Psoas muscle (tissue), 8 donors: ENCODE measurements at regions of chr16 and their contacts with region 1.

Region 1: GRCh38 chr16:49407873-49408550 is 34.4 kb downstream of the C16orf78 start:
- DNase-seq: peak; percentile 86 to 93
- ATAC-seq: peak; percentile 98 to 100 (median 98)
- H3K4me3 ChIP-seq: no peak overlapping the region
- H3K27ac ChIP-seq: no peak overlapping the region
- H3K4me1 ChIP-seq: no peaks in the 10 kb centered on the region
- H3K27me3 ChIP-seq: no peaks in the 10 kb centered on the region
- CTCF ChIP-seq: peak; percentile 94

Region 2: DNA sequence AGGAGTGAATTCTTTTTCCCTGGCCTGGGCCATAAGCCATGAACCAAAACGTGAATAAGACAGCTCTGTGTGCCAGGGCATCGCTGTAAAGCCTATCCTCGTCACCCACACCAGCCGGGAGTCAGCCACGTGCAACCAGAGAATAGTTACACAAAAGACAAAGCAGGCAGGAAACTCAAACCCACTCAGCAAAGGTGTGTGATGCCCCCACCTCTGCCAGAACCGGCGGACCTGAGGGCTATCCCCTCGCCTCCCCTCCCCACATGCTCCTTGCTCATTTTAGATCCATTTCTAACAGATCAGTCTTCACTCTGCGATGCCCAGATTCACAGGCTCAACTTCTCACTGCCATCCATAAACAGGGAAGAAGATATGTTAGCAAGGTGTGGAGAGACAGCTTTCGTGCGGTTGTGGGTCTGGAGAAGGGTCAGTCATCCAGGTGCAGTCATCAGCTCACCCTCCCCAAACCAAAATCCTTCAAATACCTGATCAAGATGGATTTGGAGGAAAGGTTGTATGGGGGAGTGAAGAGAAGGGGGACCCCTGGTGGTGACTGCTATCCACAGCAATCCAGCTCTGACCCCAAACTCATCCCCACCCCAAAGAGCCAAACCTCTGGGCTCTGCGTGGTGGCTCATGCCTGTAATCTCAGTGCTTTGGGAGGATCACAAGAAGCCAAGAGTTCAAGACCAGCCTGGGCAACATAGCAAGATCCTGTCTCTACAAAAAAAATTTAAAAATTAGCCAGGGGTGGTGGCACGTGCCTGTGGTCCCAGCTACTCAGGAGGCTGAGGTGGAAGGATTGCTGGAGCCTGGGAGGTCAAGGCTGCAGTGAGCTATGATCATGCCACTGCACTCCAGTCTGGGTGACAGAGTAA is 184.8 kb after region 1 on chr16:
- intact Hi-C with region 1: loop called (anchors 2 to 5 kb)
- DNase-seq: peak in 1 of 2 donors; percentile 64
- ATAC-seq: peak in 3 of 4 donors; percentile 54 to 77 (median 62)
- H3K4me3 ChIP-seq: no peak overlapping the region
- H3K27ac ChIP-seq: no peak overlapping the region
- H3K4me1 ChIP-seq: peaks cover 25% of the 10 kb centered on the region
- H3K27me3 ChIP-seq: peaks cover 0 to 3% (median 0%) of the 10 kb centered on the region in 3 donors
- CTCF ChIP-seq: peak; percentile 69

Region 3: GRCh38 chr16:49631187-49632041 is 223.4 kb after region 1 on chr16:
- intact Hi-C with region 1: no loop called
- DNase-seq: no peak
- ATAC-seq: peak in 1 of 4 donors; percentile 34
- H3K4me3 ChIP-seq: no peak overlapping the region
- H3K27ac ChIP-seq: no peak overlapping the region
- H3K4me1 ChIP-seq: peaks cover 6% of the 10 kb centered on the region
- H3K27me3 ChIP-seq: no peaks in the 10 kb centered on the region
- CTCF ChIP-seq: no peak

Region 4: DNA sequence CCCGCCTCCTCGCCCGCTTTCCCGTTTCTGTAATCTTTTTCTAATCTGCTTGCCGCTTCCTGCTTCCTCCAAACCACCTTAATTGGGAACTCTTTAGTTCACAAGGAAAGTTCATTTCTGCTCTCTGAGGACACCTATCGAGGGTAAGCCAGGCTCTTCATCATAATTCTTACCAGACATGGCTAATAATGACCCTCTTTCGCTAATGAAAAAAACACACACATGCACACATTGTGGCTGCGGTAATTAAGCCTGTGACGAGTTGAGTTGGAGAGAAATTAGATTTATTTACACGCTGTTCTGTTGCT is 347.3 kb after region 1 on chr16:
- intact Hi-C with region 1: loop called in 1 of 2 experiments (anchors 10 kb)
- DNase-seq: no peak
- ATAC-seq: peak in 2 of 4 donors; percentile 51 to 70
- H3K4me3 ChIP-seq: peak overlapping the region; percentile 50
- H3K27ac ChIP-seq: peak overlapping the region; percentile 63
- H3K4me1 ChIP-seq: peaks cover 16% of the 10 kb centered on the region
- H3K27me3 ChIP-seq: no peaks in the 10 kb centered on the region
- CTCF ChIP-seq: peak; percentile 33

Region 5: GRCh38 chr16:49876716-49877129 is 468.7 kb after region 1 on chr16:
- intact Hi-C with region 1: loop called (anchors 2 to 10 kb)
- DNase-seq: peak; percentile 78 to 84
- ATAC-seq: peak; percentile 81 to 96 (median 92)
- H3K4me3 ChIP-seq: peak overlapping the region; percentile 48
- H3K27ac ChIP-seq: no peak overlapping the region
- H3K4me1 ChIP-seq: no peaks in the 10 kb centered on the region
- H3K27me3 ChIP-seq: peaks cover 0 to 5% (median 0%) of the 10 kb centered on the region in 3 donors
- CTCF ChIP-seq: peak; percentile 87

Region 6: GRCh38 chr16:49884033-49885015 is 476.3 kb after region 1 on chr16:
- intact Hi-C with region 1: loop called in 1 of 2 experiments (anchors 10 kb)
- DNase-seq: no peak
- ATAC-seq: no peak
- H3K4me3 ChIP-seq: no peak overlapping the region
- H3K27ac ChIP-seq: no peak overlapping the region
- H3K4me1 ChIP-seq: no peaks in the 10 kb centered on the region
- H3K27me3 ChIP-seq: peaks cover 0 to 5% (median 0%) of the 10 kb centered on the region in 3 donors
- CTCF ChIP-seq: no peak

Region 7: DNA sequence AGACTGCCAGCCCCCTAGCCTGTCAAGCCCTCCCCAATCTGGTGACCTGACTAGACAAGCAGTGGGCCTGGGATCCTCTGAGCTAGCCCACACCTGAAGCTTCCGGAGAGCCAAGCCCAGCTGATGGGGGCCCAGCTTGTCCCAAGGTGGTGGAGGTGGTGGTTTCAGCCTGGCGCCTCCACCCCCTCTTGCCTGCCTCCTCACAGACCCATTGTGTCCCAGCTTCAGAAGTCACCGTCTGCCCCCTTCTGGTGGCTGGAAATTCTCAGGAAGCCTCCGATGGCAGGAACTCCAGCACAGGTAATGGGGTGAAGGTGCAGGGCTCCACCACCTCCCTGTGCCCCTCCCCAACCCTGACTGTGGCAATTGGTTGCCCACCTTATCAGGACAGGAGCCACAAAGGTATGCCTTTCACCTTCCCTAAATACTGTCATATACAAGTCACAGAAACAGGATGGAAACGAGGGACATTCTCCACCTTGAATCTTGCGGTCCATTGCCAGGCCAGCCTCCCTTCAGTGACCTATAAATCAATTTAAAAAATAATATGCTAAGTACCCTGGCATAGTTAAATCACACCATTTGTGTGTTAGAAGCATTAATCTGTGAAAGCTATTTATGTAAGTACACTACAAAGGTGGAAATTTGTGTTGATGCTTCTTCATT is 513.9 kb after region 1 on chr16:
- intact Hi-C with region 1: loop called (anchors 1 to 5 kb)
- DNase-seq: peak; percentile 40 to 60
- ATAC-seq: peak; percentile 67 to 83 (median 77)
- H3K4me3 ChIP-seq: no peak overlapping the region
- H3K27ac ChIP-seq: no peak overlapping the region
- H3K4me1 ChIP-seq: no peaks in the 10 kb centered on the region
- H3K27me3 ChIP-seq: no peaks in the 10 kb centered on the region
- CTCF ChIP-seq: peak; percentile 59